Endothelial cell of umbilical vein (primary cell): ENCODE measurements at regions of chr17 and their contacts with region 1.

Region 1: DNA sequence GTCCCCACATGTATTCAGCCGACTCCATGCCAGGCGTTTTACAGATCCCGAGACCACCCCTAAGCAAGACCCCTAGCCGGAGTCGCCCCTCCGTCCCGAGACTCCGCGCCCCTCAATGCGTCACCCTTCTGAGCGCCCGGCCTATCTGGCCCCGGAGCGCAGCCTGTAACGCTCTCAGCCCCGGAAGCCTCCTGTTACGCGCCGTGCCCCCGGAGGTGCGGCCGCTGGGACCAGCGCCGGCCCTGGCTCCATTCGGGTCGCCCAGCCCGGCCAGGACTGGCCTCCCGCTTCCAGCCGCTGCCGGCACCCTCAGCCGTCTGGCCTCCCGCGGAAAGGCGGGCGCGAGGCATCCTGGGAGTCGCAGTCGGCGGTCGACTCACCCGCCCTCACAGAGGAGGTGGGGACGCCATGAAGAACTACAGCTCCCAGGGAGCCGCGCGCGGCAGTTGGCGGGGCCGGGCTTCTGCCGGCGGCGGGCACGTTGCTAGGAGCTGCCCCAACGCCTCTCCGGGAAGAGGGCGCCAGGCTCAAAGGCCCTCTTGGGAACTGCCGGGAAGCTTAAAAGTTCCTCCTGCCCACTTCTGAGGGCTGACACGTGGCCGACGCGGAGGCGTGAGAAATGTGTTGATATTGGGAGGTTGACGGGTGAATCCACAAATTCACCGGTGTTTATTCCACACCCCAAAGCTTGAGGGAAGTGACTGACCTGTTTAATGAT is at the start of gene FBF1:
- DNase-seq: peak; percentile 96
- H3K4me3 ChIP-seq: peak within 1 kb of the TSS; percentile 40 to 82 (median 79)
- H3K27ac ChIP-seq: peak within 1 kb of the TSS; percentile 23
- H3K4me1 ChIP-seq: peaks cover 6% of the 10 kb centered on the region
- H3K27me3 ChIP-seq: no peaks in the 10 kb centered on the region
- CTCF ChIP-seq: peak in 1 of 2 donors; percentile 4
- POLR2A ChIP-seq: peak; percentile 90
- total RNA-seq, gene FBF1: 8.9 and 9.4 TPM in 2 replicates

Region 2: DNA sequence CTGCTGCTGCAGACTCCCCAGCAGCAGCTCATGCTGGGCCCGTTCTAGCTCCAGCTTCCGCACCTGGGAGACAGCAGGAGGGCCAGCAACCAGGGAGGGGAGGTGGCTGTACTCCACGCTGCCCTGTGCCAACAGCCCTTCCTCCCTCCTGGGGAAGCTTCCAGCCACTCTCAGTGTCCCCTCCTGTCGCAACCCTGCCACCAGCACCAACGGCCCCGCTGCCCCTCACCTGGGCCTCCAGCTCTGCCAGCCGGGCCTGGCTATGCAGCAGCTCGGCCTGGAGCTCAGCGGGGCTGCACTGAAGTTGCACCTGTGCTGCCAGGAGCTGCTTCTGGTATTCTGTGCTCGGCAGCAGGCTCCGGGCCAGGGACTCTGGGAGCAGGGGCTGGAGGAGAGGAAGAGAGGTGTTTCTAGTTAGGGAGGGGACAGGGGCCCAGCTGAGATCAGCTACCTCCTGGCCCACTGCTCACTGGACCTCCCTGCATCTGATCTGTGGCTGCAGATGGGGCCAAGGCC is 20.8 kb before region 1 on chr17:
- CTCF ChIA-PET with region 1: no interaction called
- POLR2A ChIA-PET with region 1: no interaction called
- dilution Hi-C with region 1: no loop called
- intact Hi-C with region 1: no loop called
- DNase-seq: no peak
- H3K4me3 ChIP-seq: no peak overlapping the region
- H3K27ac ChIP-seq: no peak overlapping the region
- H3K4me1 ChIP-seq: no peaks in the 10 kb centered on the region
- H3K27me3 ChIP-seq: no peaks in the 10 kb centered on the region
- CTCF ChIP-seq: no peak
- POLR2A ChIP-seq: no peak

Region 3: DNA sequence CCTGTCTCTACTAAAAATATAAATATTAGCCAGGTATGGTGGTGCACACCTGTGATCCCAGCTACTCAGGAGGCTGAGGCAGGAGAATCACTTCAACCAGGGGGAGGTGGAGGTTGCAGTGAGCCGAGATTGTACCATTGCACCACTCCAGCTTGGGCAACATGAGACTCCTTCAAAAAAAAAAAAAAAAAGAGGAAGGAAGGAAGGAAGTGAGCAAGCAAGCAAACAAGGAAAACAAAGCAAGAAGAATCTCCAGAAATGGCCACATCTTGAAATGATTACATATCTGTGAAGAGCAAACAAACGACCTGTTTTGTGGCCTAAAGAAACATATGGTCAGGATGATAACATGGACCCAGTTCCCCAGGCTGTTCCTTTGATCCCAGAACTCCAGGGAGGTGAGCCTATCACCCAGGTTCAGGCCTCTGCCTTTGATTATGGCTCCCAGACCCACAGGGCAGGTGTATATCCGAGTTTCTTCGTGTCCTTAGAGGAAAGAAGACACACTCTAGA is 29.2 kb after region 1 on chr17:
- CTCF ChIA-PET with region 1: interaction called, 3 read pairs
- POLR2A ChIA-PET with region 1: no interaction called
- dilution Hi-C with region 1: no loop called
- intact Hi-C with region 1: loop called (anchors 2 kb)
- DNase-seq: peak; percentile 72
- H3K4me3 ChIP-seq: no peak overlapping the region
- H3K27ac ChIP-seq: peak overlapping the region; percentile 88
- H3K4me1 ChIP-seq: peaks cover 17% of the 10 kb centered on the region
- H3K27me3 ChIP-seq: no peaks in the 10 kb centered on the region
- CTCF ChIP-seq: no peak
- POLR2A ChIP-seq: no peak

Region 4: GRCh38 chr17:75978938-75979704 is 38.2 kb after region 1 on chr17 and contains the starts of genes ACOX1 and TEN1:
- CTCF ChIA-PET with region 1: interaction called, 5 read pairs
- POLR2A ChIA-PET with region 1: interaction called, 4 read pairs
- dilution Hi-C with region 1: no loop called
- intact Hi-C with region 1: loop called (anchors 1 kb)
- DNase-seq: peak; percentile 95
- H3K4me3 ChIP-seq: peak within 1 kb of the TSS; percentile 65 to 77 (median 70)
- H3K27ac ChIP-seq: peak within 1 kb of the TSS; percentile 94
- H3K4me1 ChIP-seq: peaks cover 19% of the 10 kb centered on the region
- H3K27me3 ChIP-seq: no peaks in the 10 kb centered on the region
- CTCF ChIP-seq: peak in 1 of 2 donors; percentile 38
- POLR2A ChIP-seq: peak; percentile 61
- total RNA-seq, gene ACOX1: 45.1 and 47.0 TPM in 2 replicates
- total RNA-seq, gene TEN1: 14.3 and 18.8 TPM in 2 replicates

Region 5: DNA sequence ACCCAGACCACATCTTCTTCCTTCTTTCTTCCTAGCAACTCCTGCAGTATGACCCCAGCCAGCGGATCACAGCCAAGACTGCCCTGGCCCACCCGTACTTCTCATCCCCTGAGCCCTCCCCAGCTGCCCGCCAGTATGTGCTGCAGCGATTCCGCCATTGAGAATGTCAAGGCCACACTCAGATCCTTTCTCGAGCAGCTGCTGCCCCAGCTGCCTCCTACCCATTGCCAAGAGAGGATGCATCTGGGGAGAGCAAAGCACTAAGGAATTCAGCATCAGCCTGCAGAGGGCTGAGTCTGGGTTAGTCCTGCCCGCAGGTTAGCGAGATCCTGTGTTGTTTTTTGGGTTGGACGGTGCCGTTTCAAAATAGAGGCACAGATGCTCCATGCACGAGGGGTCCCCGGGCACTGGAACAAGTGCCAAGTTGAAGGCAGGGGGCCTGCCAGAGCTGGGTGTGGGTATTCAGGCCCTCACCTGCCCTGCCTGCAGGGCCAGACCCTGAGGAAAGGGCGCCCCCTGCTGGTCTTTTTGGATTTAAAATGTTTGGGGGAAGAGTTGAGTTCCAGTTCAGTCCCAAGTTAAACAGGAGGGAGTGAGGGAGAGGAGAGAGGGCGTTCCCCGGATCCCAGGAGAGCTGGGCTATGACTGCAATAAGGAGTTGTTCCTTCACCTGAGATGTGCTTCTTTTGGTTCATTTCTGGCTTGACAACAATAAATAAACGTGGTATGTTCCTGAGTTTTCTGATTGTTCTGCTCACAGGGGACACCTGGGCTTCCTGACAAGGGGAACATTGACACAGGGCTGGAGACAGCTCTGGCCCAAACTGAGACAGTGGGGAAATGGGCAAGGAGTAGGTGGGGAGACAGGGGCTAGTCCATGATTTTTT is 64.6 kb after region 1 on chr17:
- CTCF ChIA-PET with region 1: interaction called, 3 read pairs
- POLR2A ChIA-PET with region 1: no interaction called
- dilution Hi-C with region 1: no loop called
- intact Hi-C with region 1: loop called (anchors 1 kb)
- DNase-seq: peak; percentile 64
- H3K4me3 ChIP-seq: no peak overlapping the region
- H3K27ac ChIP-seq: no peak overlapping the region
- H3K4me1 ChIP-seq: no peaks in the 10 kb centered on the region
- H3K27me3 ChIP-seq: no peaks in the 10 kb centered on the region
- CTCF ChIP-seq: peak; percentile 59 to 65
- POLR2A ChIP-seq: no peak

Region 6: DNA sequence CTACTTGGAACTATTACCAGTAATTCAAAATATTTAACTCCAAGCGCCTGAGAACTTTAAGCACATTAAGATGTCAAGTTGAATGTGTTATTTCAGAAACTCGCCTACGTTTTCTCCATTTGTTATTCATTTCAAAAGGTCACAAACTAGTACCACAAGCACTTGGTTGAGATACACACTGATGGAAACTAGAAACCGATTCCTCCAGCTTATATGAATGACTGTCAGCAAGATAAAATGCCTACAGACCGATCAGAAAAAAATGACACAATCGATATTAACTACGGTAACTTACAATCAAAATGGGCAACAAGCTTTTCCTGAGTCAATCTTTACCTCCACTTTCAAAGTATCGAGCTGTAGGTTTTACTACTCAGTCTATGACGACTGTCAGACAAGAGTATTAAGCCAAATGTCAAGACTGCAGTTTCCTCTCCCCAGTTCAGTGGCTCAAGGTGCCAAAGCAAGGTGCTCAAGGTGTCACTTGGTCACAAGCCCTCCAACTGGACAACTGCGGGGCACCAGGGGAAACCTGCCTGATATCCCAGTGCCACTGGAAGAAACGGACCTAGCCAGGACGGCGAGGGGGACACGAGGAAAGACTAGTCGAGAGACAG is 130.8 kb after region 1 on chr17:
- CTCF ChIA-PET with region 1: no interaction called
- POLR2A ChIA-PET with region 1: no interaction called
- dilution Hi-C with region 1: no loop called
- intact Hi-C with region 1: no loop called
- DNase-seq: no peak
- H3K4me3 ChIP-seq: peak overlapping the region; percentile 59 to 95 (median 73)
- H3K27ac ChIP-seq: peak overlapping the region; percentile 67
- H3K4me1 ChIP-seq: peaks cover 16% of the 10 kb centered on the region
- H3K27me3 ChIP-seq: peaks cover 27 to 33% of the 10 kb centered on the region in 2 experiments
- CTCF ChIP-seq: no peak
- POLR2A ChIP-seq: no peak

Region 7: GRCh38 chr17:76296186-76296585 is 355.3 kb after region 1 on chr17:
- CTCF ChIA-PET with region 1: no interaction called
- POLR2A ChIA-PET with region 1: no interaction called
- dilution Hi-C with region 1: no loop called
- intact Hi-C with region 1: loop called (anchors 2 kb)
- DNase-seq: no peak
- H3K4me3 ChIP-seq: no peak overlapping the region
- H3K27ac ChIP-seq: no peak overlapping the region
- H3K4me1 ChIP-seq: peaks cover 4% of the 10 kb centered on the region
- H3K27me3 ChIP-seq: no peaks in the 10 kb centered on the region
- CTCF ChIP-seq: no peak
- POLR2A ChIP-seq: no peak